Posterior cingulate gyrus (tissue), 11 donors: ENCODE measurements at regions of chr11 and their contacts with region 1.

Region 1: DNA sequence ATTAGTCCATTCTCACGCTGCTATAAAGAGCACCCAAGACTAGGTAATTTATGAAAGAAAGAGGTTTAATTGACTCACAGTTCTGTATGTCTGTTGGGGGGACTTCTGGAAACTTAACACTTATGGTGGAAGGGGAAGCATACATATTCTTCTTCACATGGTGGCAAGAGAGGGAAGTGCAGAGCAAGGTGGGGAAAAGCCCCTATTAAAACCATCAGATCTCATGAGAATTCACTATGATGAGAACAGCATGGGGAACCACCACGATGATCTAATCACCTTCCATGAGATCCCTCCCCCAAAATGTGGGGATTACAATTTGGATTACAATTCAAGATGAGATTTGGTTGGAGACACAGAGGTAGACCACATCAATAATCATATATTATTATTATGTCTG is 25.7 kb downstream of the CEP57 start:
- DNase-seq: no peak

Region 2: DNA sequence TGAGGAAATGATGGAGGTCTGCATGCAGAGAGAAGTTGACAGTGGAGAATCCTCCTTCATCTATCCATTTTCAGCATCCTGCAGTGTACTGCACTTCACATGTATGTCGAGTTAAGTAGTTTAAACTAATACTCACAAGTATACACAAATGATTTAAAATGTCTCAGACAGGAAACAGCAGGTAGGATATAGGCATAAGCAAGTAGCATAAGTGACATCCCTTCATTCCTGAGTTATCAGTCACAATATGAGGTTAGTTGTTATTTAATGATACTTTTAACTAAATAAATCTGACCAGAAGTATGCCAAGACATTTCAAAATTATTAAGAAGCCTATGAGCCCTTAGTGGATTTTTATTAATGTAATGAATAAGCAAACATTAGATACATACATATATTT is 70.4 kb after region 1 on chr11:
- intact Hi-C with region 1: loop called (anchors 2 kb)
- DNase-seq: no peak